CD4-positive, alpha-beta memory T cell (primary cell): ENCODE measurements at regions of chr1 and their contacts with region 1.

Region 1: DNA sequence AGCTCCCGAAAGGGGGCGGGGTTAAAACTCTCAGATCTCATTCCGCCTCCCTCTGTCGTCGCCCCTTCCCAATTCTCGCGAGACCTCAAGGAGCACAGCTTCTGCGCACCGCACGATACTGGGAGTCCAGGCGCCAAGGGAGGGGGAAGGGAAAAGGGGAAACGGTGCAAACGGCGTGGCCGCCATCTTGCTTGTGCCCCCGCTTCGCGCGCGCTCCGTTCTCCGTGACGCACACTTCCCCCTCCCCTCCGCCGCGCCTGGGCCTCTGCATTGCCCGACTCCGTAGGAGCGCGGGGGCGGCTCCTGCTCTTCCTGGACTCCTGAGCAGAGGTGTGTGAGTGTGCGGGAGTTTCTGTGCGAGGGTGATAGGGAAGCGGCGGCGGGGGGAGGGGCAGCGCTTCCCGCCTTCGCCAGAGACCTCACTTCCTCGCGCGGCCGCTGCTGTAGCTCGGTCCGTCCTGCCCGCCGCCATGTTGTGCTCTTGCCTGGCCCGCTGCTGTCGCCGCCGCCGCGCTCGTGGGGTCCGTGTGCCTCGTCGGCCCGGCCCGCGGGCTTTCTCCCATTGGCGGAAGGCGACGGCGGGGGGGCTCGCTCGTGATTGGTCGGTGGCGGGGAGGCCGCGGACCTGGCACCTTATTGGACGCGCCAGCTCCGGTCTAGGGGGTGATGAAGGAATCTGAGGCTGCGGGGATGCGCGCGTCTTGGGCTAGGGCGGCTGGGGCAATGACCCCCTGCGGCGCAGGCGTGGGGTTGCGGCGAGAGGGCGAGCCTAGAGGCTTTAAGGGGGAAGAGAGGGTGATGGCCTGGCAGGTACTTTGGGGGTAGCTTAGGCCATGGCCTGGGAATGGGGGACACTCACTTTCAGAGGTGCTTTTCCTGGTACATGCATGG is at the start of gene NFYC:
- DNase-seq: peak; percentile 93 to 97 (median 96)
- H3K4me3 ChIP-seq: peak within 1 kb of the TSS; percentile 74 to 86
- H3K4me3 Mint-ChIP-seq: peak within 1 kb of the TSS; percentile 89 to 97 (median 94)
- H3K27ac ChIP-seq: peak within 1 kb of the TSS; percentile 98
- H3K27ac Mint-ChIP-seq: peak within 1 kb of the TSS; percentile 94 to 98 (median 96)
- H3K4me1 ChIP-seq: peaks cover 60% of the 10 kb centered on the region
- H3K4me1 Mint-ChIP-seq: peaks cover 51 to 69% (median 58%) of the 10 kb centered on the region in 4 donors
- H3K27me3 ChIP-seq: no peaks in the 10 kb centered on the region
- H3K27me3 Mint-ChIP-seq: no peaks in the 10 kb centered on the region
- total RNA-seq, gene NFYC: 70.4 to 73.6 TPM

Region 2: DNA sequence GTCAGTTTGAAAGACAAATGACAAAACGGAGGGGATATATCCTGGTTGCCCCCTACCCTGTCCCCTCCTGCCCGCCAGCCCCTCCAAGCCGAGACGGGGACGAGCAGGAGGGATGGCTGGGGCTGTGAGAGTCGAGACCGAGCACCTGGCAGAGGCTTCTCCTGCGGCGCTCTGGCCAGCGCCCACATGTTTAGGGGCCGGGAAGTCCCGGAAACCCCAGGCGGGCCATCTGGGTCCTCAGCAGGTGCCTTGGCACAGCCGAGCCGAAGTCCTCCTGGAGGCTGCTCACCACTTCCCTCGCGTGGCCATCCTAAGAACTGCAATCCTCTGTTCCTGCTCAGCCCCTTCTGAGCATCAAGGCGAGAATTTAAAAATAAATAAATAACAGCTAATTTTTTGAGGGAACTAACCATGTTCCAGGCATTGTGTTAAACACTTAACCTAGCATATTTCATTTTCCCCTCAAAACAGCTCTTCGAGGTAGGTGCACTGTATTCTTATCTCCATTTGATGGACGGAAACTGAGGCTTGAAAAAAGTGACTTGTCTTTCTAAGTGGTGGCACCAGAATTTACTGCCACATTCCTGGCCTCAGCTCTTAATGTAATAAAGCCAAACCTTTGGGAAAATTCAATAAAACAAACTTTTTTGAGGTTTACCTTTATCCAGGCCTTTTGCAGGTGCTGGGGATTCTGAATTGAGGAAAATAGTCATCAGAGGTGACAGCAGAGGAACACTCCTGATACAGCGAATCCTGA is 22.8 kb before region 1 on chr1:
- CTCF ChIA-PET with region 1: interaction called, 24 read pairs
- POLR2A ChIA-PET with region 1: interaction called, 28 read pairs
- intact Hi-C with region 1: loop called (anchors 1 kb)
- DNase-seq: peak; percentile 73 to 78 (median 76)
- H3K4me3 ChIP-seq: peak overlapping the region in 1 of 2 donors; percentile 38
- H3K4me3 Mint-ChIP-seq: peak overlapping the region in 6 of 8 donors; percentile 10 to 78 (median 53)
- H3K27ac ChIP-seq: no peak overlapping the region
- H3K27ac Mint-ChIP-seq: no peak overlapping the region
- H3K4me1 ChIP-seq: peaks cover 21% of the 10 kb centered on the region
- H3K4me1 Mint-ChIP-seq: peaks cover 4 to 28% (median 13%) of the 10 kb centered on the region in 4 donors
- H3K27me3 ChIP-seq: no peaks in the 10 kb centered on the region
- H3K27me3 Mint-ChIP-seq: no peaks in the 10 kb centered on the region

Region 3: DNA sequence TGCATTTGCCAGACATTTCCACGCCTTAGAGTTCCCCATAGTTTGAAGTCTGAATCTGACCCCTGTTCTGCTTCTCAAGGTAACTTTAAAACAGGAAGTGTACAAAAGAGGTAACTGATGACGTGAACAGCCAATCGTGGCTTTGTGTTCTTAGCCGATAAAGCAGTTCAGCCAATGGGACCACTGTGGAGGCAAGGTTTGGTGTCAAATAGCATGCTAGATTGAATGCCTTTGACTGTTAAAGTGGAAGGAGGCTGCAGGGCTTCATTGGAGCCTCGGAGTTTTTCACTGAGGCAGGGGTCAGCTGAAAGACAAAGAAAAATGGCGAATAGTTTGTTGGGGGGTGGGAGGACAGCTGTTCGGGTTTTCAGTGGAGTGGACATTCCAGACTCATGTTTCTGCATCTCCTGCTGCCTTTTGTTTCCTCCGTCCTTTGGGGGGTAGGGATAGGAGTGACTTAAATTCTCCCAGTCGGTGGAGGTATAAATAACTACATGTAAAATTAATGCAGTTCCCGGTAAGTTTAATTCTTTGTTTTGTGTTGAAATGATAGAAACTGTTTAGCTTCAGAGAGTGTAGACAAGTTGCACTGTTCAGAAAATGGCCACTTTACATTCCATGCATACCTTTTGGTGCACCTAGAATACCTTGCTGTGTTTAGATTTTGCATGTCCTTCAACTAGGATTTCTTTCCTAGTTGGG is 17.5 kb after region 1 on chr1:
- CTCF ChIA-PET with region 1: interaction called, 27 read pairs
- POLR2A ChIA-PET with region 1: interaction called, 137 read pairs
- intact Hi-C with region 1: loop called (anchors 1 kb)
- DNase-seq: peak; percentile 81 to 91 (median 85)
- H3K4me3 ChIP-seq: peak overlapping the region; percentile 37 to 58
- H3K4me3 Mint-ChIP-seq: peak overlapping the region; percentile 88 to 98 (median 95)
- H3K27ac ChIP-seq: peak overlapping the region; percentile 57
- H3K27ac Mint-ChIP-seq: peak overlapping the region; percentile 85 to 98 (median 94)
- H3K4me1 ChIP-seq: peaks cover 71% of the 10 kb centered on the region
- H3K4me1 Mint-ChIP-seq: peaks cover 38 to 82% (median 59%) of the 10 kb centered on the region in 4 donors
- H3K27me3 ChIP-seq: no peaks in the 10 kb centered on the region
- H3K27me3 Mint-ChIP-seq: no peaks in the 10 kb centered on the region

Region 4: GRCh38 chr1:40722636-40723035 is 30.9 kb after region 1 on chr1:
- CTCF ChIA-PET with region 1: no interaction called
- POLR2A ChIA-PET with region 1: interaction called, 10 read pairs
- intact Hi-C with region 1: no loop called
- DNase-seq: no peak
- H3K4me3 ChIP-seq: no peak overlapping the region
- H3K4me3 Mint-ChIP-seq: no peak overlapping the region
- H3K27ac ChIP-seq: no peak overlapping the region
- H3K27ac Mint-ChIP-seq: peak overlapping the region in 1 of 7 donors; percentile 65
- H3K4me1 ChIP-seq: peaks cover 13% of the 10 kb centered on the region
- H3K4me1 Mint-ChIP-seq: peaks cover 26 to 72% (median 47%) of the 10 kb centered on the region in 4 donors
- H3K27me3 ChIP-seq: no peaks in the 10 kb centered on the region
- H3K27me3 Mint-ChIP-seq: no peaks in the 10 kb centered on the region

Region 5: DNA sequence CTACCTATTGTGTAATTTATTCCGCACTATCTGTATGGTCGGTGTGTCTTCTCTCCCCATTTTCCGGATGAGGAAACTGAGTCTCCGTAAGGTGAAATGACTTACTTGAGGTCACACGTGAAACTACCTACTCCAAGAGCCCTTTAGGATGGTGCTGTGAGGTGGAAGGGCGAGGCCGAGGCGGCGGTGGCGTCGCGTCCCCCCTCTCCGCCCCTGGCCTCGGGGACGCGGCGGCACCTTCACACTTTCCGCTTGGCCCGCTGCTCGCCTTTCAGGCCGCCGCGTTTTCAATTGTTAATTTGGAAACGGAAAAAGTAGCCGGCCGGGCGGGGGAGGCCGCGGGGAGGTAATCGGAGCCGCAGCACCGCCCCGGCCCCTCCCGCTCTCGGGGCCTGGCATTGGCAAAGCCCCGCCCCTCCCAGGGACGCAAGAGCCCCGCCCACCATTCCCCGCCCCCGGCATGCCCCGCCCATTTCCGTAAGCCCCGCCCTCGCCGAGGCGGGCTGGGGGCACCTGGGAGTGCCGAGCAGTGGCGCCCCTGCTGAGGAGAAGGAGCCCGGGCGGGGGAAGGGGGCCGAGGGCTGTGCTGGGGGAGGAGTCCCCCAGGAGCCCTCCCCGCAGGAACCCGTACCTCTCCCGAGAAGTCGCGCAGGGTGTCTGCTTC is 110.4 kb after region 1 on chr1:
- CTCF ChIA-PET with region 1: no interaction called
- POLR2A ChIA-PET with region 1: interaction called, 9 read pairs
- intact Hi-C with region 1: loop called (anchors 1 kb)
- DNase-seq: peak; percentile 85 to 88 (median 86)
- H3K4me3 ChIP-seq: peak overlapping the region in 1 of 2 donors; percentile 62
- H3K4me3 Mint-ChIP-seq: peak overlapping the region; percentile 66 to 87 (median 78)
- H3K27ac ChIP-seq: peak overlapping the region; percentile 63
- H3K27ac Mint-ChIP-seq: peak overlapping the region; percentile 22 to 90 (median 86)
- H3K4me1 ChIP-seq: peaks cover 25% of the 10 kb centered on the region
- H3K4me1 Mint-ChIP-seq: peaks cover 16 to 37% (median 28%) of the 10 kb centered on the region in 4 donors
- H3K27me3 ChIP-seq: no peaks in the 10 kb centered on the region
- H3K27me3 Mint-ChIP-seq: no peaks in the 10 kb centered on the region

Region 6: DNA sequence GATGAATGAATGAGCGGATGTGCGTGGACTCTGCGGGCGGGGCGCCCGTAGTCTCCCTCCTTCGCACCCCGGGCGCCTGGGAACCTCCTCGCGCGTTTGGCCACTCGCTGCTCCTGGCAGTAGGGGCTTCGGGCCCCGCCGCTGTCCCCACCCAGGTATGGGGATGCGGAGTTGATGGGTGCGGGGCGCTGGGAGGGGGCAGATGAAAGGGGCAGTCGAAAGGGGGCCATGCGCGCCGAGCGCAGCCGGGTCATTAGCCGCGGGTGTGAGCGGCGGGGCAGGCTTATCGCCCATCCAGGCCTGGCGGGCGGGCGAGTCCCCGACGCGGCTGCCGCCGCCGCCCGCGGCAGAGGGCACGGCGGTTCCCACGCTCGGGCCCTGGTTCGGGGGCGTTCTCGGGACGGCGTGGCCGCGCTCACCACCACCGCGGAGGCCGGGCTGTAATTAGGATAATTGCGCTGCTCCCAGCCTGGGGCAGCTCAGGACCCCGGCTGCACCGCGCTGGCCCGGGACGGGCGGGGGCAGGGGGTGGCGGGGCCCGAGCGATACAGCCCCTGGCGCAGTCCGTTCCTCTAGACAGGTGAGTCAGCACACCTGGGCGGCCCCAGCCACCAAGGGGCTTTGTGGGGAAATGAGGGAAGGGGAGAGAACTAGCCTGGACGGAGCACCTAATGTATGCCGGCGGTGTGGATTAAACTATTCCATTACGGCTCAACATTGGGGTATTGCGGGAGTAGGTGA is 192.4 kb after region 1 on chr1:
- CTCF ChIA-PET with region 1: no interaction called
- POLR2A ChIA-PET with region 1: no interaction called
- intact Hi-C with region 1: no loop called
- DNase-seq: no peak
- H3K4me3 ChIP-seq: no peak overlapping the region
- H3K4me3 Mint-ChIP-seq: peak overlapping the region in 6 of 8 donors; percentile 17 to 74 (median 40)
- H3K27ac ChIP-seq: no peak overlapping the region
- H3K27ac Mint-ChIP-seq: peak overlapping the region in 2 of 7 donors; percentile 56 to 64
- H3K4me1 ChIP-seq: no peaks in the 10 kb centered on the region
- H3K4me1 Mint-ChIP-seq: peaks cover 1 to 5% (median 4%) of the 10 kb centered on the region in 4 donors
- H3K27me3 ChIP-seq: no peaks in the 10 kb centered on the region
- H3K27me3 Mint-ChIP-seq: peaks cover 31 to 42% of the 10 kb centered on the region in 2 donors

Region 7: DNA sequence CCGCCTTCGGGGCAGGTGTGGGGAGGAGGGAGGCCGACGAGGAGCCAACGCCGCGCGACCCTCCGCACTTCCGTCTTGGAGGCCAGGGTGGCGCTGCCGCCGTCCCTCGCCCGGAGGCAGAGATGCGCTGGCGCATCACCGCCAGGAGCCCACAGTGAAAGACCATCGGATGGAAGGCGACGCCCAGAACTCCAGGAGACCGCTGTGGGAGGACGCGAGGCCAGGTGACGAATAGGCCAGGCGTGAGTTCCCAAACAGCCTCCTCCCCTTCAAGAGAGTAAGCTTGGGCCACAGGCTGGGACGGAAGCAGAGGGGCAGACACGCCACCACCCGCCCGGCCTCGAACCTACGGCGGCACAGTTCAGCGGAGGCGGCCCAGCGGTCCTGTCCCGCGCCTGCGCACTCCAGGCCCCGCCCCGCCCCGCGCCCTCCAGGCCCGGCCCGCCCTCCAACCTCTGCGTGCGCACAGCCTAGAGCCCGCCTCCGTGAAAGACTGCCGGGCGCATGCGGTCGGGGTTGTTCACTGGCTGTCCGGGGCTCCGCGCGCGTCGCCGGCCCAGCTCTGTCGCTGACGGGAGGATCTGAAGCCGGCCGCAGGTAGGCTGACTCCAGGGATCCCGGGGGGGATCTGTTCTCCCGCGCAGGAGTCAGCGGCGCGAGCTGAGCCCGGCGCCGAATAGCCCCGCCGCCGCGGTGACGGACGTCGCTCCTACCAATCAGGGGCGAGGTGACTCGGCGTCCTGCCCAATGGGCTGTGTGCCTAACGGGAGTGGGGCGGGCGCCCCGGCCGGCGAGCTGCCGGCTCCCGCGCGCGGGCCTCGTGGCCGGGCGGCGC is 287.7 kb after region 1 on chr1 and contains the start of gene CTPS1:
- CTCF ChIA-PET with region 1: no interaction called
- POLR2A ChIA-PET with region 1: interaction called, 17 read pairs
- intact Hi-C with region 1: no loop called
- DNase-seq: peak; percentile 94 to 96 (median 95)
- H3K4me3 ChIP-seq: peak within 1 kb of the TSS; percentile 45 to 80
- H3K4me3 Mint-ChIP-seq: peak within 1 kb of the TSS; percentile 83 to 97 (median 90)
- H3K27ac ChIP-seq: peak within 1 kb of the TSS; percentile 81
- H3K27ac Mint-ChIP-seq: peak within 1 kb of the TSS; percentile 88 to 98 (median 92)
- H3K4me1 ChIP-seq: peaks cover 25% of the 10 kb centered on the region
- H3K4me1 Mint-ChIP-seq: peaks cover 17 to 31% (median 22%) of the 10 kb centered on the region in 4 donors
- H3K27me3 ChIP-seq: no peaks in the 10 kb centered on the region
- H3K27me3 Mint-ChIP-seq: no peaks in the 10 kb centered on the region
- total RNA-seq, gene CTPS1: 18.5 to 19.7 TPM